ENCODE measurements at regions of chrX and their contacts with region 1.

Region 1: GRCh38 chrX:130049821-130050220 is 60.5 kb downstream of the ELF4 start:
- DNase-seq: no peak
- H3K4me3 ChIP-seq: no peak overlapping the region
- H3K27ac ChIP-seq: no peak overlapping the region
- H3K4me1 ChIP-seq: no peaks in the 10 kb centered on the region
- H3K27me3 ChIP-seq: no peaks in the 10 kb centered on the region
- CTCF ChIP-seq: no peak
- EP300 ChIP-seq: no peak
- POLR2A ChIP-seq: no peak

Region 2: DNA sequence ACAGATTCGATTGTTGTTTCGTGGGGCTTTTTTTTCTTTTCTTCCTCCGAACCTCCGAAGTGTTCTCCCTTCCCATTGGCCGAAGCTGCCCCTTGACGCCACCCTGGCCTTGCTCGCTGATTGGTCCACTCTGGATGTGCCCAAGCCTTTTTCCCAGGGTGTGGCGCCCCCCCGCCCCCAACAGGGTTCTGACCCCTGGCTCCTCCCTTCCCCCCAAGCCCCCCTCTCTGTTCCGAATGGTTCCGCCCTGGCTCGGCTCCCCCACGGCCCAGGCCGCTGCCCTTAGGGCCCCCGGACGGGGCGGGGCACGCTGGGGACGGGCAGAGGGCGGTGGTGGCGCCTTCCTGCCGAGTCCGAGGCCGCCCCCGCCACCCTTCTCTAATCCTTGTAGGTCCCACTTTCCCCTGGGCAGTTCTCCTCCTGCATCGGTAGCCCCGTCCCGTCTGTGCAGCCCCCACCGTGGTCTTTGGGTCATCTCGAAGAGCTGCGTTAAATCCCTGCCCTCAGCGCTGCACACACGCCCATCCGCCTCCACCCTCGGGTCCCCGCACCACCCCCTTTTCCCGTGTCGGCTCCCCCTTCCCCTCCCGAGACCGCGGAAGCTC is 118.3 kb before region 1 on chrX:
- intact Hi-C with region 1: no loop called
- DNase-seq: peak; percentile 88 to 93 (median 92)
- H3K4me3 ChIP-seq: peak overlapping the region; percentile 47
- H3K27ac ChIP-seq: peak overlapping the region; percentile 79 to 91
- H3K4me1 ChIP-seq: no peaks in the 10 kb centered on the region
- H3K27me3 ChIP-seq: no peaks in the 10 kb centered on the region
- CTCF ChIP-seq: no peak
- EP300 ChIP-seq: no peak
- POLR2A ChIP-seq: no peak

Region 3: DNA sequence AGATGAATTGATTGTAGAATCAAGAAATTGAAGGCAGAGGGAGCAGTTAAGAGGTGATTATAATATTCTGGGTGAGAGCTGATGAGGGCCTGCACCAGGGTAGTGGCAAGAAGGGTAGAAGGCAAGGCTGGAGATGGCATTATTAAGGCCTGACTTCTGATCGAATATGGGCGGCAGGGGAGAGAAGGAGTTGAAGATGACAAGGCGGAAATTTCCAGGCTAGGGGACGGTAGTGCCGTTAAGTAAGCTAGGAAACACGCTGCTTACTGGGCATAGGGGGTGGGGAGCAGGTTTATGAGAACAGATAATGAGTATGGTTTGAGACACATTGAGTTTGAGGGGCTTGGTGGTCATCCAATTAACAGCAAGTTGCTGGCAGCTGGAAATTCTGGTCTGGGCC is 47.9 kb before region 1 on chrX:
- intact Hi-C with region 1: loop called in 1 of 4 experiments (anchors 2 kb)
- DNase-seq: no peak
- H3K4me3 ChIP-seq: no peak overlapping the region
- H3K27ac ChIP-seq: no peak overlapping the region
- H3K4me1 ChIP-seq: peaks cover 3% of the 10 kb centered on the region
- H3K27me3 ChIP-seq: no peaks in the 10 kb centered on the region
- CTCF ChIP-seq: no peak
- EP300 ChIP-seq: no peak
- POLR2A ChIP-seq: no peak

Region 4: DNA sequence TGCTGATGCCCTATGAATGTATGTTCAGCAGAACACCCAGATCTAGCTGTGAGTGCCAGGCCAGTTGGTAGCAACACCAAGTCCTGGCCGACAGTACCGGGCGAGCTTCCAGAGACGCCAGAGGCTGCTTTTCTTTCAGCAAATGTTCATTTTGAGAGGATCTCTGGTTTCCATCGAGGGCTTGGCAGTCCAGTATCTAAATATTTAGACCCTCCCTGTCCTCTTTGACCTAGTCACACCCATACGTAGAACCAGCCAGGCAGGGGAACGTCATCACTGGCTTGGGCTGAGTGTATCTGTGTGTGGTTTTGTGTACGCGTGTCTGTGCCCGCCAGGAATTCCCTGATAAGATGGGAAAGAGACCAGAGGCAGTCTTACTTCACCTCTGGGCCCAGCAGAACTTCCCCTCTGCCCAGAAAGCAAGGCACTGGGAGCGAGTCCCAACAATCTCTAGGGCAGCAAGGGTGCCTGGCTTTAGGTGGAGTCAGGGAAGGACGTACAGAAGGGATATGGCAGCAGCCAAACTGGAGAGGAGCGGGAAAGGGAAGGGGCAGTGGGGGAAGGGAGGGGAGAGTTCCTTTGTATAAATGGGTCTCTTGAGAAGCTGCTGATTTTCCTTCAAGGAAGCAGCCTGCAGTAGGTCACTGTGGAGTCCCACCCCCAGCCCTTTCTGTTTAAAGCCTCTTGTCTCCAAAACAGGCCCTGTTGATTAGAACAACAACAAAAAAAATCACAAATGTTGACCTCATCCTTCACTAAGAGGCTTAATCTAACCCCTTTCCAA is 75.5 kb after region 1 on chrX:
- intact Hi-C with region 1: no loop called
- DNase-seq: peak in 4 of 5 donors; percentile 24 to 67 (median 35)
- H3K4me3 ChIP-seq: no peak overlapping the region
- H3K27ac ChIP-seq: peak overlapping the region in 1 of 2 donors; percentile 23
- H3K4me1 ChIP-seq: peaks cover 2% of the 10 kb centered on the region
- H3K27me3 ChIP-seq: no peaks in the 10 kb centered on the region
- CTCF ChIP-seq: no peak
- EP300 ChIP-seq: no peak
- POLR2A ChIP-seq: no peak

Region 5: GRCh38 chrX:130165703-130166502 is 116.1 kb after region 1 on chrX and contains the start of gene AIFM1:
- intact Hi-C with region 1: no loop called
- DNase-seq: peak; percentile 89 to 92 (median 90)
- H3K4me3 ChIP-seq: peak within 1 kb of the TSS; percentile 39
- H3K27ac ChIP-seq: peak within 1 kb of the TSS; percentile 47 to 77
- H3K4me1 ChIP-seq: peaks cover 2% of the 10 kb centered on the region
- H3K27me3 ChIP-seq: no peaks in the 10 kb centered on the region
- CTCF ChIP-seq: no peak
- EP300 ChIP-seq: no peak
- POLR2A ChIP-seq: peak; percentile 46
- total RNA-seq, gene AIFM1: 5.2 to 25.6 (median 20.5) TPM

Measured in ovary (tissue), 10 donors.